HepG2 (cell line): ENCODE measurements at regions of chr19 and their contacts with region 1.

Region 1: GRCh38 chr19:10644260-10645007 is 9.7 kb upstream of the ILF3 start:
- DNase-seq: peak; percentile 74
- ATAC-seq: peak; percentile 84
- H3K4me3 ChIP-seq: peak overlapping the region; percentile 29 to 70 (median 44); a peak in 5 of 6 replicates
- H3K27ac ChIP-seq: peak overlapping the region; percentile 11
- H3K4me1 ChIP-seq: peaks cover 80% of the 10 kb centered on the region
- H3K27me3 ChIP-seq: no peaks in the 10 kb centered on the region
- CTCF ChIP-seq: peak; percentile 94
- EP300 ChIP-seq: no peak
- POLR2A ChIP-seq: no peak
- RAD21 ChIP-seq: peak; percentile 92

Region 2: GRCh38 chr19:10580979-10581631 is 63.3 kb before region 1 on chr19:
- CTCF ChIA-PET with region 1: interaction called, 69 read pairs
- POLR2A ChIA-PET with region 1: interaction called, 20 read pairs
- in situ Hi-C with region 1: loop called (anchors 5 kb)
- intact Hi-C with region 1: loop called (anchors 1 kb)
- DNase-seq: peak; percentile 86
- ATAC-seq: peak; percentile 51
- H3K4me3 ChIP-seq: peak overlapping the region in 1 of 3 experiments; percentile 59; a peak in 2 of 6 replicates
- H3K27ac ChIP-seq: no peak overlapping the region
- H3K4me1 ChIP-seq: peaks cover 30% of the 10 kb centered on the region
- H3K27me3 ChIP-seq: peaks cover 3 to 14% of the 10 kb centered on the region in 2 experiments; a peak in 3 of 5 replicates
- CTCF ChIP-seq: peak; percentile 97
- EP300 ChIP-seq: no peak
- POLR2A ChIP-seq: no peak
- RAD21 ChIP-seq: peak; percentile 96